Right ventricle myocardium inferior (tissue), 1 donor: ENCODE measurements at regions of chr1 and their contacts with region 1.

Region 1: GRCh38 chr1:13788783-13789182 is 88.8 kb downstream of the PRDM2 start:
- DNase-seq: no peak
- ATAC-seq: no peak

Region 2: GRCh38 chr1:13749543-13750341 is 39.0 kb before region 1 on chr1:
- intact Hi-C with region 1: loop called (anchors 5 kb)
- DNase-seq: peak; percentile 92
- ATAC-seq: peak; percentile 10